Activated CD4-positive, alpha-beta T cell treated with anti-CD3 and anti-CD28 coated beads for 36 hours (primary cell): ENCODE measurements at regions of chr6 and their contacts with region 1.

Region 1: GRCh38 chr6:42050266-42051032 is at the start of gene TAF8:
- DNase-seq: peak; percentile 94
- ATAC-seq: peak; percentile 76
- H3K4me3 Mint-ChIP-seq: peak within 1 kb of the TSS; percentile 88
- H3K27ac Mint-ChIP-seq: peak within 1 kb of the TSS; percentile 96
- H3K4me1 Mint-ChIP-seq: peaks cover 64% of the 10 kb centered on the region
- H3K27me3 Mint-ChIP-seq: no peaks in the 10 kb centered on the region
- total RNA-seq, gene TAF8: 52.3 to 53.1 TPM

Region 2: DNA sequence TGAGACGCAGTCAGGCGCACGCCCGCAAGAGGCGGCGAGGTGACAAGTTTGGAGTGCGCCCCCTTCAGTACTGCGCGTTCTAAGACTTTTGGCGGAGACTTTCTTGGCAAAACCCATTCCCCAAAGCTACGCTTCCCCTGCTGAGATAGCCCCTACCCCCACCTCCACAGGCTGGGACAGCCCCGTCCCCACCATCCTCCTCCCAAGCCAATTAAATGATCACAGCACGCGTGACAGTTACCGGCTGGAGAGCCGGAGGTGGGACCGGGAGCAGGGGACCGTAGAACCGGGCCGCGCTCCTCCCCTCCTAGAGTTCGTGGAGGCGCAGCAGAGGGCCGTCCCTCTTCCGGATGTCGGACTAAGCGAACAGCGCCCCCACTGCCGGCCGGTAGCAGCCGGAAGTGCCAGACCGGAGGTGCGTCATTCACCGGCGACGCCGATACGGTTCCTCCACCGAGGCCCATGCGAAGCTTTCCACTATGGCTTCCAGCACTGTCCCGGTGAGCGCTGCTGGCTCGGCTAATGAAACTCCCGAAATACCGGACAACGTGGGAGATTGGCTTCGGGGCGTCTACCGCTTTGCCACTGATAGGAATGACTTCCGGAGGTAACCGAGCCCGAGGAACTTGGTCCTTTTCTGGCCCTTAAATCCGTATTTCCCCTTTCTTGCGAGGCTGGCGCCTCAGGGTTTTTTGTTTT is 263.1 kb before region 1 on chr6 and contains the start of gene TOMM6:
- CTCF ChIA-PET with region 1: interaction called, 63 read pairs
- POLR2A ChIA-PET with region 1: interaction called, 6 read pairs
- intact Hi-C with region 1: loop called in 1 of 2 experiments (anchors 1 kb)
- DNase-seq: peak; percentile 98
- ATAC-seq: peak; percentile 86
- H3K4me3 Mint-ChIP-seq: peak within 1 kb of the TSS; percentile 96
- H3K27ac Mint-ChIP-seq: peak within 1 kb of the TSS; percentile 98
- H3K4me1 Mint-ChIP-seq: peaks cover 19% of the 10 kb centered on the region
- H3K27me3 Mint-ChIP-seq: peaks cover 2% of the 10 kb centered on the region
- total RNA-seq, gene TOMM6: 282 to 345 TPM